ENCODE measurements at regions of chr13 and their contacts with region 1.

Region 1: DNA sequence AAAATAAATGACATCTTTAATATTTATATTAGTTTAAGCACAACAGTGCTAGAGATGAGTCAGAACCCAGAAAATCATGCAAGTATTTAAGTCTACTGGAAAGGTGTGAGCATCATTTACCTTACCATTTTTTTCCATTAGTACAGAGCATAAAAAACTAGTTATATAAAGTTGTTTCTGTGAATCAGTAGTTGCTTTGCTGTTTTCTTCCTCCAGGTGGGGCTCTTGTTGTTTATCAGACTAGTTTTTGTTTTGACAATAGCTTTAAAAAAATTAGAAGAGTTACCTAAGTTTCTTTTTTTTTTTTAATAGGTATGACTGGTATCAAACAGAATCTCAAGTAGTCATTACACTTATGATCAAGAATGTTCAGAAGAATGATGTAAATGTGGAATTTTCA is 12.7 kb downstream of the SUGT1 start:
- DNase-seq: peak; percentile 22
- H3K4me3 ChIP-seq: no peak overlapping the region
- H3K27ac ChIP-seq: no peak overlapping the region
- H3K4me1 ChIP-seq: no peaks in the 10 kb centered on the region; a peak in 1 of 4 replicates
- H3K27me3 ChIP-seq: no peaks in the 10 kb centered on the region
- CTCF ChIP-seq: peak; percentile 67
- EP300 ChIP-seq: no peak
- RAD21 ChIP-seq: peak; percentile 59

Region 2: GRCh38 chr13:52652196-52652979 is 12.9 kb before region 1 on chr13 and contains the start of gene SUGT1:
- CTCF ChIA-PET with region 1: interaction called, 36 read pairs
- POLR2A ChIA-PET with region 1: no interaction called
- DNase-seq: peak; percentile 91
- H3K4me3 ChIP-seq: peak within 1 kb of the TSS; percentile 81 to 96
- H3K27ac ChIP-seq: peak within 1 kb of the TSS; percentile 100
- H3K4me1 ChIP-seq: peaks cover 0 to 6% of the 10 kb centered on the region in 2 experiments; a peak in 2 of 4 replicates
- H3K27me3 ChIP-seq: no peaks in the 10 kb centered on the region
- CTCF ChIP-seq: peak; percentile 68
- EP300 ChIP-seq: 0 out of 4 replicates have a peak, but pooled peaks of 1 of the 2 experiments have one; percentile 43
- RAD21 ChIP-seq: no peak
- polyA plus RNA-seq, gene SUGT1: 17.8 and 18.6 TPM in 2 replicates

Region 3: DNA sequence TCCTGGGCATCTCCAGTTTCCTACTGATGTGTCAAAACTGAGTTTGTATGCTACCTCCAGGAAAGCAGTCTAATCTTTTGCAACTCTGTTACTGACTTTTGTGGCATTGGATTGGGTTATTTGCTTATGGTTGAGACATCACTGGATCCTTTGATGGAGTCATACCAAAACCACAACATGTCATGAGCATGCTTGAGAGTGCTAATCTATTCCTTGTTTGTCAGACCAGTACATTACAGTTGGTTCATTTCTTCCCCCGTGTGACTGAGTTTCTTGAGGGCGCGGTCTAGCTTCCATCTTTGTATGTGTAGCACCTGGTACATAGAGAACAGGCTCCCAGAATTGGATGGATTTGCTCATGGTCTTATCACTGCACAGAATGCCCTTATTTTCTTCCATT is 30.5 kb after region 1 on chr13:
- CTCF ChIA-PET with region 1: interaction called, 25 read pairs
- POLR2A ChIA-PET with region 1: no interaction called
- DNase-seq: no peak
- H3K4me3 ChIP-seq: no peak overlapping the region
- H3K27ac ChIP-seq: no peak overlapping the region
- H3K4me1 ChIP-seq: no peaks in the 10 kb centered on the region
- H3K27me3 ChIP-seq: no peaks in the 10 kb centered on the region
- CTCF ChIP-seq: no peak
- EP300 ChIP-seq: no peak
- RAD21 ChIP-seq: no peak

Region 4: GRCh38 chr13:52809310-52809769 is 144.0 kb after region 1 on chr13:
- CTCF ChIA-PET with region 1: interaction called, 68 read pairs
- POLR2A ChIA-PET with region 1: no interaction called
- DNase-seq: peak; percentile 93
- H3K4me3 ChIP-seq: no peak overlapping the region; a peak in 1 of 4 replicates
- H3K27ac ChIP-seq: peak overlapping the region in 1 of 2 experiments; percentile 21; a peak in 1 of 4 replicates
- H3K4me1 ChIP-seq: peaks cover 6 to 7% of the 10 kb centered on the region in 2 experiments
- H3K27me3 ChIP-seq: no peaks in the 10 kb centered on the region; the same call in 1 of the 2 replicates
- CTCF ChIP-seq: peak; percentile 78
- EP300 ChIP-seq: peak in 1 of 2 experiments; percentile 59; a peak in 1 of 4 replicates
- RAD21 ChIP-seq: peak; percentile 93

Region 5: GRCh38 chr13:52830946-52831345 is 165.6 kb after region 1 on chr13:
- CTCF ChIA-PET with region 1: interaction called, 18 read pairs
- POLR2A ChIA-PET with region 1: interaction called, 5 read pairs
- DNase-seq: no peak
- H3K4me3 ChIP-seq: no peak overlapping the region
- H3K27ac ChIP-seq: no peak overlapping the region
- H3K4me1 ChIP-seq: peaks cover 6 to 20% of the 10 kb centered on the region in 2 experiments; a peak in 2 of 4 replicates
- H3K27me3 ChIP-seq: no peaks in the 10 kb centered on the region
- CTCF ChIP-seq: no peak
- EP300 ChIP-seq: no peak
- RAD21 ChIP-seq: no peak

Region 6: DNA sequence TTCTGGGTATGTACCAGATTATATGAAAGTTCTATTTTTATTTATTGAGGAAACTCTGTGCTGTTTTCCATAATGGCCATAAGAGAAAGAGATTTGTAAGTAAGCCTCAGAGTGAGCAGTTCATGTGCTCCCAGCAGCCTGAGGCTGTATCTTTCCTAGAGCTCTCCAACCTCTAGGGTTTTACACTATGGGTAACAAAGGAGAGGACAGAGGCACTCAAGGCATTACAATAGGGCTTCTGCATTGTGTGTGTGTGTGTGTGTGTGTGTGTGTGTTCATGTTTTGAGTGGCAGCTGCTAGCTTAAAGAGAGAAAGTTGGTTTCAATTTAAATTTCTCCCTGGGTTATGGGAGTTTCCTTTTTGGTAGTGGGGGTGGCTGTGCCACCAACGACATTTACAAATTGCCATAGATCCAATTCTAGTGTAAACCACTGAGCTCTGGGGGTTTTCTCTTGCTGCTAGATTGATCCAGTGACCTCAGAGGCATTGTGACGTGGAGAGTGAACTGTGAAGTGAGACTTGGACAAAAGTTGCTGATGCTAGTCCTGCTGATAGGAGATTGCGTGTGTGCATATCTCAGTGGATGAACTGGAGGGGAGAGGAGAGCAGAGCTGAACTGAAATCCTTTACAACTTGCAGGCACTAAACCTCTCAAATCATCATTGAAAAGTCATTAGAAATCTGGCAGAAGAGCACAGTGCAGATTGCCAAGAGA is 296.0 kb after region 1 on chr13:
- CTCF ChIA-PET with region 1: no interaction called
- POLR2A ChIA-PET with region 1: no interaction called
- DNase-seq: no peak
- H3K4me3 ChIP-seq: no peak overlapping the region
- H3K27ac ChIP-seq: no peak overlapping the region
- H3K4me1 ChIP-seq: no peaks in the 10 kb centered on the region
- H3K27me3 ChIP-seq: no peaks in the 10 kb centered on the region
- CTCF ChIP-seq: no peak
- EP300 ChIP-seq: no peak
- RAD21 ChIP-seq: no peak

Region 7: GRCh38 chr13:53200498-53201453 is 535.5 kb after region 1 on chr13:
- CTCF ChIA-PET with region 1: interaction called, 10 read pairs
- POLR2A ChIA-PET with region 1: no interaction called
- DNase-seq: peak; percentile 44
- H3K4me3 ChIP-seq: no peak overlapping the region; a peak in 1 of 4 replicates
- H3K27ac ChIP-seq: no peak overlapping the region
- H3K4me1 ChIP-seq: no peaks in the 10 kb centered on the region; a peak in 2 of 4 replicates
- H3K27me3 ChIP-seq: no peaks in the 10 kb centered on the region
- CTCF ChIP-seq: no peak; the same call in 1 of the 2 replicates
- EP300 ChIP-seq: no peak
- RAD21 ChIP-seq: no peak

Measured in SK-N-SH (cell line).